Astrocyte of the cerebellum (primary cell): ENCODE measurements at regions of chr2 and their contacts with region 1.

Region 1: GRCh38 chr2:40451918-40452605 is at the start of gene SLC8A1:
- DNase-seq: no peak
- H3K4me3 ChIP-seq: peak within 1 kb of the TSS; percentile 72
- CTCF ChIP-seq: no peak

Region 2: DNA sequence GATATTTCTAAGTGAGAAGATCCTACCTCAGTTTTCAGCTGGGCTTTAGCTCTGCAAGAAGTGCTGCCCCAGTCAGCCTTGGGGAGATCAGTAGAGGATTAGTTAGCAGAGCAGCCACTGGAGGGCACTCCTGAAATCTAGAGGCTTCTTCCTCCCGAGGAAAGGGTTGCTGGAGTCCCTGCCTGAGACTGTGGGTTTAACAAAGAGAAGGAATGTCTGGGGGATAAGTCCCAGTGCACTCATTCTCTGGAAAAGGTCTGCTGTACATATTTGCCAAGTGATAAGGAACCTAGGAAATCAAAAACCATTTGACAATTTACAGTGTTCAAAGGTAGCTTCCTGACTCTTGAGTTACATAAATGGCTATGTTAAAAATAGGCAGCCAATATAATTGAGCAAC is 207.4 kb before region 1 on chr2:
- in situ Hi-C with region 1: loop called (anchors 5 kb)
- DNase-seq: peak; percentile 52
- H3K4me3 ChIP-seq: no peak overlapping the region
- CTCF ChIP-seq: peak; percentile 75